ENCODE measurements at regions of chr3 and their contacts with region 1.

Region 1: GRCh38 chr3:29280404-29281093 is at the start of gene RBMS3:
- DNase-seq: peak; percentile 95
- H3K4me3 ChIP-seq: peak within 1 kb of the TSS; percentile 63 to 74 (median 66)
- H3K27ac ChIP-seq: peak within 1 kb of the TSS; percentile 77 to 90 (median 88)
- H3K4me1 ChIP-seq: peaks cover 3 to 37% (median 30%) of the 10 kb centered on the region in 4 donors
- H3K27me3 ChIP-seq: no peaks in the 10 kb centered on the region
- CTCF ChIP-seq: peak; percentile 34 to 72 (median 42)
- EP300 ChIP-seq: no peak
- POLR2A ChIP-seq: no peak
- total RNA-seq, gene RBMS3: 53.0 to 81.5 (median 61.2) TPM

Region 2: DNA sequence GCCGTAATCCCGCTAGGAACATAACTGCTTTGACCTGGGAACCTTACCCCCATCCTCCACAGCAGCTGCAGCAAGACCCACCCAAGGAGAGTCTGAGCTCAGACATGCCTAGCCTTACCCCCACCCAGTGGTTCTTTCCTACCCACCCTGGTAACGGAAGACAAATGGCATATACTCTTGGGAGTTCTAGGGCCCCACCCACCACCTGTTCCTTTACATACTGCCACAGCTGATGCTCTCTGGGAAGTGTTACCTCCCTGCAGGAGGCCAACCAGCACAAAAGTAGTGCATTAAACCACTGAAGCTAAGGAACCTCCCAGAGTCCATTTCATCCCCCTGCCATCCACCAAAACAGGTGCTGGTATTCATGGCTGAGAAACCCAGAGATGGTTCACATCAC is 881.3 kb before region 1 on chr3:
- intact Hi-C with region 1: no loop called
- DNase-seq: no peak
- H3K4me3 ChIP-seq: no peak overlapping the region
- H3K27ac ChIP-seq: no peak overlapping the region
- H3K4me1 ChIP-seq: no peaks in the 10 kb centered on the region
- H3K27me3 ChIP-seq: no peaks in the 10 kb centered on the region
- CTCF ChIP-seq: no peak
- EP300 ChIP-seq: no peak
- POLR2A ChIP-seq: no peak

Region 3: GRCh38 chr3:28924744-28925360 is 355.7 kb before region 1 on chr3:
- intact Hi-C with region 1: loop called (anchors 10 kb)
- DNase-seq: no peak
- H3K4me3 ChIP-seq: no peak overlapping the region
- H3K27ac ChIP-seq: no peak overlapping the region
- H3K4me1 ChIP-seq: no peaks in the 10 kb centered on the region
- H3K27me3 ChIP-seq: no peaks in the 10 kb centered on the region
- CTCF ChIP-seq: no peak
- EP300 ChIP-seq: no peak
- POLR2A ChIP-seq: no peak

Region 4: DNA sequence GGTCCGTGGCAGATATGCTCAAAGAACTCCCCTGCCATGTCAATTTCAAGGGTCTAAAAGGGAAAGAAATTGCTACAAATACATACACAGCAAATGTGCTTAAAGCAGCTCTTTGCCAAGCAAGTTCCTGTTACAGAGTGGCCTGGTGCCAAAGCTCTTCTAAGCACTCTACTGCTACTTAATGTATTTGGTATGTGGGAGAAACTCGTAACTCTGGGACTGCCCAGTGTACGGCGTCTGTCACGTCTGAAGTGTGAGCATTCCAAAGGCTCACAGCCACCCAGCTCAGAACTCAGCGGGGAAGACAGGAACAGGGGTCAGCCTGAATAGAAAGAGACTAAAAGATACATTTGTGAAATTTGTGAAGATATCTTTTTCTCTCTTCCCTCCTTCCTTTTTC is 54.9 kb after region 1 on chr3:
- intact Hi-C with region 1: loop called (anchors 5 kb)
- DNase-seq: no peak
- H3K4me3 ChIP-seq: peak overlapping the region; percentile 39 to 49 (median 46)
- H3K27ac ChIP-seq: peak overlapping the region; percentile 73 to 86 (median 80)
- H3K4me1 ChIP-seq: peaks cover 56 to 96% (median 93%) of the 10 kb centered on the region in 4 donors
- H3K27me3 ChIP-seq: no peaks in the 10 kb centered on the region
- CTCF ChIP-seq: no peak
- EP300 ChIP-seq: no peak
- POLR2A ChIP-seq: no peak

Region 5: GRCh38 chr3:29537889-29538609 is 257.5 kb after region 1 on chr3:
- intact Hi-C with region 1: loop called (anchors 10 kb)
- DNase-seq: no peak
- H3K4me3 ChIP-seq: no peak overlapping the region
- H3K27ac ChIP-seq: peak overlapping the region; percentile 4 to 55 (median 18)
- H3K4me1 ChIP-seq: peaks cover 8 to 21% (median 20%) of the 10 kb centered on the region in 4 donors
- H3K27me3 ChIP-seq: no peaks in the 10 kb centered on the region
- CTCF ChIP-seq: no peak
- EP300 ChIP-seq: no peak
- POLR2A ChIP-seq: no peak

Region 6: GRCh38 chr3:29759411-29760225 is 479.1 kb after region 1 on chr3:
- intact Hi-C with region 1: loop called (anchors 5 kb)
- DNase-seq: no peak
- H3K4me3 ChIP-seq: peak overlapping the region in 3 of 4 donors; percentile 5 to 11 (median 6)
- H3K27ac ChIP-seq: peak overlapping the region; percentile 62 to 78 (median 70)
- H3K4me1 ChIP-seq: peaks cover 41 to 68% (median 61%) of the 10 kb centered on the region in 4 donors
- H3K27me3 ChIP-seq: no peaks in the 10 kb centered on the region
- CTCF ChIP-seq: no peak
- EP300 ChIP-seq: no peak
- POLR2A ChIP-seq: no peak